ENCODE measurements at regions of chr16 and their contacts with region 1.

Region 1: DNA sequence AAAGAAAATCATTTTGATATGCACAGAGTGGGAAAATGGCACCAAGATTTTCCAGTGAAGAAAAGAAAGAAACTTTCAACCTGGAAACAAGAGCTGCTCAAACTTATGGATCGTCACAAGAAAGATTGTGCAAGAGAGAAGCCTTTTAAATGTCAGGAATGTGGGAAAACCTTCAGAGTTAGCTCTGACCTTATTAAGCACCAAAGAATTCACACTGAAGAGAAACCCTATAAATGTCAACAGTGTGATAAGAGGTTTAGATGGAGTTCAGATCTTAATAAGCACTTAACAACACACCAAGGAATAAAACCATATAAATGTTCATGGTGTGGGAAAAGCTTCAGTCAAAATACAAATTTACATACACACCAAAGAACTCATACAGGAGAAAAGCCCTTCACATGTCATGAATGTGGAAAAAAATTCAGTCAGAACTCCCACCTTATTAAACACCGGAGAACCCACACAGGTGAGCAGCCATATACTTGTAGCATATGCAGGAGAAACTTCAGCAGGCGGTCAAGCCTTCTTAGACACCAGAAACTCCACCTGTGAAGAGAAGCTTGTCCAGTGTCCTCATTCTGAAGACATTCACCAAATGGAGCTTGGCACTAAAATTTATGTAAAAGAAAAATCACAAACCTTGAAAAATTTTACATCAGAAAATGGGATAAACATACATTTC is 12.2 kb downstream of the ZNF75A start:
- DNase-seq: no peak
- ATAC-seq: no peak
- H3K4me3 ChIP-seq: no peak overlapping the region
- H3K27ac ChIP-seq: no peak overlapping the region
- H3K4me1 ChIP-seq: no peaks in the 10 kb centered on the region
- H3K27me3 ChIP-seq: no peaks in the 10 kb centered on the region
- CTCF ChIP-seq: no peak
- POLR2A ChIP-seq: no peak

Region 2: DNA sequence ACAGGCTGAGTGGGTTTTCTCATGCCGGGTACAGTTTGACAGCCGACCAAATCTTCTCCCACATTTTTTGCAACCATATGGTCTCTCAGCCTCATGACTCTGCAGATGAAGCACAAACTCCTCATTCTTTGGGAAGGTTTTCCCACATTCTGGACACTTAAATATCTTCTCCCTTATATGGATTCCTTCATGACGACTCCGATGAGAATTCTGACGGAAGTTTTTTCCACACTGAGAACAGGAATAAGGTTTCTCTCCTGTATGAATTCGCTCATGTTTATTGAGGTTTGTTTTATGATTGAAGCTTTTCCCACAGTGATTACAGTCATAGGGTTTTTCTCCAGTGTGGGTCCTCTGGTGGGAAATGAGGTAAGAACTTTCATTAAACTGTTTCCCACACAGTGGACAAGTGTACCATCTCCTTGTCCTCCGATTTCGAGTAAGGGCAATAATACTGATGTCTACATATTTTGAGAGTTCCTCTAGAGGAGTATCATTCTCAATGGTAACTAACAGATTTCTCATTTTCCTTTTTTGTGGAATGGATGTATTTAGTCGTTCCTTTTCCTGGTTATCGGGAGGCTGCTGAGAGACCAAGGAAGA is 93.4 kb before region 1 on chr16:
- intact Hi-C with region 1: loop called in 1 of 10 experiments (anchors 10 kb)
- DNase-seq: no peak
- ATAC-seq: no peak
- H3K4me3 ChIP-seq: no peak overlapping the region
- H3K27ac ChIP-seq: no peak overlapping the region
- H3K4me1 ChIP-seq: no peaks in the 10 kb centered on the region
- H3K27me3 ChIP-seq: no peaks in the 10 kb centered on the region
- CTCF ChIP-seq: no peak
- POLR2A ChIP-seq: no peak

Region 3: DNA sequence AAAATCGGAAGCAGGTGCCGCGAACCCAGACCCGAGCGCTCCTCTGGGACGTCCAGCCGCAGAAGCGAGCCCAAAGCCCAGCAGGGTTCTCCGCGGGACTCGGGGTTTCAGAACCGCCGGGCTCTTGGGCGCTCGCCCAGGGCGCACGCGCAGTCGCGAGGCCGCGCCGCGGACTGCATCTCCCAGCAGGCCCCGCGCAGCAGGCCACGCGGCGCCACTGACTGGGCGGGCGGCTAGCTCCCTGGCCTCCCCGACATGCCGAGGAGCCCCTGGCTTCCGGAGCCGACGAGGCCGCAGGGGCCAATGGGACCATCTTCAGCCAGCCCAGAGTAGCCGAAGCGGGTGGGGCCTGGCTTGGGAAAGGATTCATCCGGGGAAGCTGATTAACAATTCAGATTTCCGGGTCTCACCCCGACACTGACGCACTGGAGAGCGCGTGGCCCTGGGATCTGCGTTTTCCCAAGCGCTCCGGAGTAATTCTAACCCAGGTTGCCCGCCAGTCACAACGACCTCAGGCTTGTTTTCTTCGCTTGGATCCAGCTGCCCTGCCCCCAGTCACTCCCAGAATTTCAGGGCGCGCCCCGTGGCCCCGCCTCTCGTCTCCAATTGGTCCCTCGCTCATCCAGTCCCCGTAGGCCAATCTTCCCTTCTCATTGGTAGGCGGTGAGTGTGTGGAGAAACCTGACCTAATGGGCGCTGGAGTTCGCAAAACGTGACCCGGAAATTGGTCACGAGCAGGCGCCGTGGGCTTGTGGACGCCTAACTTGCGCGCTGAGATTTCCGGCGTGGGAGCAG is 34.5 kb before region 1 on chr16 and contains the start of gene ZNF263:
- intact Hi-C with region 1: no loop called
- DNase-seq: peak; percentile 96 to 98 (median 96)
- ATAC-seq: peak; percentile 96 to 98 (median 96)
- H3K4me3 ChIP-seq: peak within 1 kb of the TSS; percentile 75 to 99 (median 94)
- H3K27ac ChIP-seq: peak within 1 kb of the TSS; percentile 98 to 100 (median 99)
- H3K4me1 ChIP-seq: peaks cover 0 to 30% (median 24%) of the 10 kb centered on the region in 12 donors
- H3K27me3 ChIP-seq: no peaks in the 10 kb centered on the region
- CTCF ChIP-seq: no peak
- POLR2A ChIP-seq: no peak
- total RNA-seq, gene ZNF263: 6.4 to 18.7 (median 9.6) TPM

Region 4: DNA sequence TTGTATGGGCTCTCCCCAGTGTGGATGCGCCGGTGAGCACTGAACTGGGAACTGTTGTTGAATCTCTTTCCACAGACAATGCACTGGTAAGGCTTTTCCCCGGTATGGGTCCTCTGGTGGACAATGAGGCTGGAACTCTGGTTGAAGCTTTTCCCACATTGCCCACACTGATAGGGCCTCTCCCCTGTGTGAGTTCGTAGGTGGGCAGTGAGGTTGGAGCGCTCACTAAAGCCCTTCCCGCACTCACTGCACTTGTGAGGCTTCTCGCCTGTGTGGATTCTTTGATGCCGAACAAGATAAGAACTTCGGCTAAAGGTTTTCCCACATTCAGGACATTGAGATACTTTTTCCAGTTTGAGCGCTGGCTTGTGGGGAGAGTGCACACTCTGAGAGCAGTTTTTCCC is 65.6 kb after region 1 on chr16:
- intact Hi-C with region 1: loop called in 2 of 10 experiments (anchors 10 kb)
- DNase-seq: no peak
- ATAC-seq: no peak
- H3K4me3 ChIP-seq: no peak overlapping the region
- H3K27ac ChIP-seq: no peak overlapping the region
- H3K4me1 ChIP-seq: no peaks in the 10 kb centered on the region
- H3K27me3 ChIP-seq: no peaks in the 10 kb centered on the region
- CTCF ChIP-seq: no peak
- POLR2A ChIP-seq: no peak

Region 5: DNA sequence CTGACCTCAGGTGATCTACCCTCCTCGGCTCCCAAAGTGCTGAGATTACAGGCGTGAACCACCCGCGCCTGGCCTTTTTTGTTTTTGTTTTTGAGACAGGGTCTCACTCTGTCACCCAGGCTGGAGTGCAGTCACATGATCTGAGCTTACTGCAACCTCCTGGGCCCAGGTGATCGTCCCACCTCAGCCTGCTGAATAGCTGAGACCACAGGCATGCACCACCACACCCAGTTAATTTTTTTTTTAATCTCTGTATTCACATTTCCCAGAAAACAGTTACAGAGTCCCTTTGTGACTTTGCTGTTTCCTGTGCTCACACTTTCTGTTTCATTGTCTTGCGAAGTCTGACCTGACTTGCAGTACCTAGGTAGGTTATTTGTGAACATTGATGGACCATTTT is 186.1 kb after region 1 on chr16:
- intact Hi-C with region 1: loop called in 1 of 10 experiments (anchors 5 kb)
- DNase-seq: no peak
- ATAC-seq: no peak
- H3K4me3 ChIP-seq: no peak overlapping the region
- H3K27ac ChIP-seq: peak overlapping the region in 1 of 12 donors; percentile 74
- H3K4me1 ChIP-seq: peaks cover 4 to 37% (median 14%) of the 10 kb centered on the region in 12 donors
- H3K27me3 ChIP-seq: no peaks in the 10 kb centered on the region
- CTCF ChIP-seq: no peak
- POLR2A ChIP-seq: no peak

Measured in heart left ventricle (tissue), 16 donors.